Naive thymus-derived CD4-positive, alpha-beta T cell (primary cell): ENCODE measurements at regions of chr3 and their contacts with region 1.

Region 1: DNA sequence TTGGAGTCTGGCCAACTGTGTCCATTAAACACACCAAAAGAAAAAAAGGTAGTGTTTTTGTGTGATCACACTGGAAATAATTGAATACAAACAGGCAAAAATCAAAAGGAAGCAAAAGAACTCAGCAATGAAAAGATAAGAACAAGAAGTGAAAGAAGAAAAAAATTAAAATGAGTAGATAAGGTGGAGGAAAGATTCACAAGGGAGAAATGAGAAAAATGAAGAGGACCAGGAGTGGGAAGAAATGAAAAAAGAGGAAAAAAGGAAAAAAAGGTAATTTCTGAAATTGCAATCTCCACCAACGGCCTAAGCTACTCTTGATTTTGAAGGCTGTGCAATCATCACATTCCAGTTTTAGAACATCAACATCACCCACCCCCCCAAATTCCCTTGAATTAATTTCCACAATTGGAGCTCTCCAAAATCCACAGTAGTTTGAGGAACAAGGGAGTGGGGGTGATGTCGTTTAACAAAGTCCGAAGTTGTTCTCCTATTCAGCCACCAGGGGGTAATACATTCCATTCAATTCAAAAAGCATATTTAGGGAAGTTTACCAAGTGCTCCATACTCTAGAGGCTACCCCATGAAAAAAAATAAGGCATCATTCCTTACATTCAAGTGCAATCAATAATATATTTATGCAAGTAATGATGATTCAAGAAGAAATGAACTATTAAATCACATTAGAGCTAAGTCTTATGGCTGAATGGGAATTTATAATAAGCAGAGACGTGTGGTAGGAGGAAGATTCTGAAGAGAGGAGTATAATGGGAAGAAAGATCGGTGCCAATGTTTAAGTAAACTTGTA is 37.4 kb downstream of the ZNF860 start:
- DNase-seq: peak in 6 of 9 donors; percentile 16 to 39 (median 32)
- ATAC-seq: peak; percentile 70
- H3K4me3 ChIP-seq: no peak overlapping the region
- H3K4me3 Mint-ChIP-seq: no peak overlapping the region
- H3K27ac ChIP-seq: no peak overlapping the region
- H3K27ac Mint-ChIP-seq: no peak overlapping the region
- H3K4me1 ChIP-seq: no peaks in the 10 kb centered on the region
- H3K4me1 Mint-ChIP-seq: peaks cover 0 to 5% (median 0%) of the 10 kb centered on the region in 7 donors
- H3K27me3 ChIP-seq: no peaks in the 10 kb centered on the region
- H3K27me3 Mint-ChIP-seq: peaks cover 0 to 13% (median 0%) of the 10 kb centered on the region in 5 donors

Region 2: GRCh38 chr3:31661993-31662686 is 356.8 kb before region 1 on chr3:
- CTCF ChIA-PET with region 1: no interaction called
- POLR2A ChIA-PET with region 1: no interaction called
- intact Hi-C with region 1: no loop called
- DNase-seq: no peak
- ATAC-seq: no peak
- H3K4me3 ChIP-seq: no peak overlapping the region
- H3K4me3 Mint-ChIP-seq: peak overlapping the region in 1 of 10 donors; percentile 33
- H3K27ac ChIP-seq: no peak overlapping the region
- H3K27ac Mint-ChIP-seq: peak overlapping the region in 1 of 9 donors; percentile 26
- H3K4me1 ChIP-seq: no peaks in the 10 kb centered on the region
- H3K4me1 Mint-ChIP-seq: peaks cover 0 to 7% (median 3%) of the 10 kb centered on the region in 7 donors
- H3K27me3 ChIP-seq: no peaks in the 10 kb centered on the region
- H3K27me3 Mint-ChIP-seq: no peaks in the 10 kb centered on the region

Region 3: DNA sequence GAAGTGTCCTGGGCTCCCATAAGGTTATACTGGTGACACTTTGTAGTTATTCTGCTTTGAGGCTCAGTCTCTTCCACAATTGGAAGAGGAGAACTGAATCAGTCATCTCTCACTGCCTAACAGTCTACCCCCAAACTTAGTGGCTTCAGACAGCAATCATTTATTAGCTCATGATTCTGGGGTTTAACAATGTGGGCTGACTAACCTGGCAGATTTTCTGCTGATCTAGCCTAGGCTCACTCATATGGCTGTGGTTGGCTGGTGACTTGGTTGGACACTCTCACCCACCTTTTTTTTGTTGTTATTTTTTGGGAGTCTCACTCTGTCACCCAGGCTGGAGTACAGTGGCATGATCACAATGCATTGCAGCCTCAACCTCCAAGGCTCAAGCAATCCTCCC is 94.6 kb after region 1 on chr3:
- CTCF ChIA-PET with region 1: interaction called, 22 read pairs
- POLR2A ChIA-PET with region 1: no interaction called
- intact Hi-C with region 1: loop called in 1 of 2 experiments (anchors 1 kb)
- DNase-seq: no peak
- ATAC-seq: no peak
- H3K4me3 ChIP-seq: no peak overlapping the region
- H3K4me3 Mint-ChIP-seq: peak overlapping the region in 8 of 10 donors; percentile 70 to 90 (median 82)
- H3K27ac ChIP-seq: no peak overlapping the region
- H3K27ac Mint-ChIP-seq: peak overlapping the region in 8 of 9 donors; percentile 74 to 95 (median 92)
- H3K4me1 ChIP-seq: peaks cover 18 to 25% of the 10 kb centered on the region in 2 donors
- H3K4me1 Mint-ChIP-seq: peaks cover 32 to 95% (median 82%) of the 10 kb centered on the region in 7 donors
- H3K27me3 ChIP-seq: no peaks in the 10 kb centered on the region
- H3K27me3 Mint-ChIP-seq: no peaks in the 10 kb centered on the region

Region 4: DNA sequence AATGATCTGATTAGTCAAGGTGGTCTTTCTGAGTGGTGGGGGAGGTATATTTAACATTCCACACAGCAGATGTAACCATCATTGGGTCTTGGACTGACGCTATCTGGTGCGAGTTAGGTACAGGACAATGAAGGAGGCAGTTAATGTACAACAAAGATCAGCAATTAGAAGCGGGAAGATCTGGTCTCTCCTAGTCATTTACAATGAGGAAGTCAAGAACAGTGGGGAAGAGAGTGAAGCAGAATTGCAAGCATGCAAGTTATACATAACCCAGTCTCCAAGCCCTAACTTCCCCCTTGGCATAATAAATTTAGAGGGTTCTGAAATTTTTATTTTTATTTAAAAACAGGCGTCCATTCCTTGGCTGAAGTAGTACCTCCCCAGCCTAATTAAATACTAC is 101.5 kb after region 1 on chr3:
- CTCF ChIA-PET with region 1: interaction called, 22 read pairs
- POLR2A ChIA-PET with region 1: no interaction called
- intact Hi-C with region 1: no loop called
- DNase-seq: no peak
- ATAC-seq: peak; percentile 67
- H3K4me3 ChIP-seq: no peak overlapping the region
- H3K4me3 Mint-ChIP-seq: no peak overlapping the region
- H3K27ac ChIP-seq: no peak overlapping the region
- H3K27ac Mint-ChIP-seq: no peak overlapping the region
- H3K4me1 ChIP-seq: peaks cover 4 to 23% of the 10 kb centered on the region in 2 donors
- H3K4me1 Mint-ChIP-seq: peaks cover 21 to 62% (median 53%) of the 10 kb centered on the region in 7 donors
- H3K27me3 ChIP-seq: no peaks in the 10 kb centered on the region
- H3K27me3 Mint-ChIP-seq: no peaks in the 10 kb centered on the region

Region 5: DNA sequence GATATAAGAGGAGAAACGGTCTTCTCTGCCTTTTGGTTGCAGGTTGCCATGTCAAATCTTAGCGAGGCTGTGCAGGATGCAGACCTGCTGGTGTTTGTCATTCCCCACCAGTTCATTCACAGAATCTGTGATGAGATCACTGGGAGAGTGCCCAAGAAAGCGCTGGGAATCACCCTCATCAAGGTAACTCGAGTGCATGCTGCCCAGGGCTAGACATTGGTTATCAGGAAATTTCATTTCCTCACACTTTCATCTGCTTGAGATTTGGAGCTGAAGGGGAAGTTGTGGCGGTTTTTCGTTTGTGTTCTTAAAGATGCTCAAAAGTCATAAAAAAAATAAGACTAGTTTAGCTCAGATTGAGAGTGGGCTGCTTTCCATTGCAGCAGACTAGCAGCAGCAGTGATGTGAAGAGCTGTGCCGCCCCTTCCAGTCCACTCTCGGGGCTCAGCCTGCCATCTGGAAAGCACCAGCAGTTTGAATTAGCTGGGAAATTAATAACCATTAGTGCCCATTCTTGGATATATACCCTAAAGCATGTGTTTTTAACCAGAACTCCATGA is 119.7 kb after region 1 on chr3:
- CTCF ChIA-PET with region 1: interaction called, 44 read pairs
- POLR2A ChIA-PET with region 1: interaction called, 5 read pairs
- intact Hi-C with region 1: no loop called
- DNase-seq: peak in 5 of 9 donors; percentile 8 to 25 (median 16)
- ATAC-seq: peak; percentile 57
- H3K4me3 ChIP-seq: no peak overlapping the region
- H3K4me3 Mint-ChIP-seq: peak overlapping the region in 7 of 10 donors; percentile 12 to 66 (median 54)
- H3K27ac ChIP-seq: no peak overlapping the region
- H3K27ac Mint-ChIP-seq: peak overlapping the region in 1 of 9 donors; percentile 6
- H3K4me1 ChIP-seq: peaks cover 7 to 13% of the 10 kb centered on the region in 2 donors
- H3K4me1 Mint-ChIP-seq: peaks cover 19 to 29% (median 21%) of the 10 kb centered on the region in 7 donors
- H3K27me3 ChIP-seq: no peaks in the 10 kb centered on the region
- H3K27me3 Mint-ChIP-seq: no peaks in the 10 kb centered on the region

Region 6: GRCh38 chr3:32143849-32144757 is 125.1 kb after region 1 on chr3:
- CTCF ChIA-PET with region 1: interaction called, 44 read pairs
- POLR2A ChIA-PET with region 1: interaction called, 5 read pairs
- intact Hi-C with region 1: loop called (anchors 1 kb)
- DNase-seq: peak in 8 of 9 donors; percentile 30 to 70 (median 60)
- ATAC-seq: peak; percentile 75
- H3K4me3 ChIP-seq: no peak overlapping the region
- H3K4me3 Mint-ChIP-seq: no peak overlapping the region
- H3K27ac ChIP-seq: no peak overlapping the region
- H3K27ac Mint-ChIP-seq: peak overlapping the region in 1 of 9 donors; percentile 21
- H3K4me1 ChIP-seq: no peaks in the 10 kb centered on the region
- H3K4me1 Mint-ChIP-seq: peaks cover 0 to 25% (median 6%) of the 10 kb centered on the region in 7 donors
- H3K27me3 ChIP-seq: no peaks in the 10 kb centered on the region
- H3K27me3 Mint-ChIP-seq: no peaks in the 10 kb centered on the region

Region 7: DNA sequence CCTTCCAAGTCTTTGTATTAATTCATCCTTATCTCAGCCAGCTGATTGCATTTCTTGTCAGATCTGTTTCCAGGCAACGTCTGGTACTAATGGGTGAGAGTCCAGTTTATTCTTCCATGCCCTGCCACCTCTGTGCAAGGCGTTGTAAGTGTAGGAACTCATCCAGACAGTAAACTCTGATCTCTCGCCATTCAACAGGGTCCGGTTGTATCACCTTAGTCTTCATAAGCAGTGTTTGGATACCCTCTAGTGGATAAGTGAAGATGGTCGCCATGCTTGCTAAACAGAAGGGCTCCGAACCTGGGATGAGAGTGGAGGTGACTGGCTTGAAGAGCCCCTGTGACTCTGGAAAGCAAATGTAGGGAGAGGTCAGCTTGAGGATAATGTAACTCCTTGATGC is 321.1 kb after region 1 on chr3:
- CTCF ChIA-PET with region 1: interaction called, 3 read pairs
- POLR2A ChIA-PET with region 1: no interaction called
- intact Hi-C with region 1: loop called in 1 of 2 experiments (anchors 1 kb)
- DNase-seq: peak in 7 of 9 donors; percentile 31 to 65 (median 56)
- ATAC-seq: peak; percentile 77
- H3K4me3 ChIP-seq: no peak overlapping the region
- H3K4me3 Mint-ChIP-seq: no peak overlapping the region
- H3K27ac ChIP-seq: no peak overlapping the region
- H3K27ac Mint-ChIP-seq: no peak overlapping the region
- H3K4me1 ChIP-seq: peaks cover 0 to 18% of the 10 kb centered on the region in 2 donors
- H3K4me1 Mint-ChIP-seq: peaks cover 18 to 30% (median 27%) of the 10 kb centered on the region in 7 donors
- H3K27me3 ChIP-seq: no peaks in the 10 kb centered on the region
- H3K27me3 Mint-ChIP-seq: no peaks in the 10 kb centered on the region